ENCODE measurements at regions of chr3 and their contacts with region 1.

Region 1: DNA sequence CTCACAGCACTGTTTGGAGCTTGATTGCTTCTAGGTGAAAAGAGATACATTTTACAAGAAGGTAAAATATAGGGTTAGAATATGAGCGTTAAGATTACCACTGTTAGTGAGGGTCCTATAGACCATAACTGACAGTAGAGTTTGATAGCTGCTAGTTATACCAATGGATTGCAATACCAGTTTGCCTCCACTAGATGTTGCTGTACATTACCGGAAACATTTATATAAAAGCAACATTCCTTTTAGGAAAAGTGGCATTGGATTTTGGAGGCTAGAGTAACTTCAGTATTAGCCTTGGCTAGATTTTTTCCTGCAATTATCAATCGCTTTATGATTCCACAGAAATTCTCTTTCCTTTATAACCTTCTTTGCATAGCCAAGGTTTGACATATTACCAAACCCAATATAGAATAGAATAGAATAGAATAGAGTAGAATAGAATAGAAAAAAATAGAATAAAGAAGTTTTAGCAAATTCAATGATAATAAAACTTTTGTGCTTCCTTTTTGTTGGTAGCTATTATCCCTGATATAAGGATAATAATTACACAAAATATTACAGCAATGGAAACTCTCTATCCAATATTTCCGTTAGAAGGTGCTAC is 1093.6 kb upstream of the ALCAM start:
- DNase-seq: peak in 7 of 42 donors; percentile 3 to 60 (median 28)

Region 2: DNA sequence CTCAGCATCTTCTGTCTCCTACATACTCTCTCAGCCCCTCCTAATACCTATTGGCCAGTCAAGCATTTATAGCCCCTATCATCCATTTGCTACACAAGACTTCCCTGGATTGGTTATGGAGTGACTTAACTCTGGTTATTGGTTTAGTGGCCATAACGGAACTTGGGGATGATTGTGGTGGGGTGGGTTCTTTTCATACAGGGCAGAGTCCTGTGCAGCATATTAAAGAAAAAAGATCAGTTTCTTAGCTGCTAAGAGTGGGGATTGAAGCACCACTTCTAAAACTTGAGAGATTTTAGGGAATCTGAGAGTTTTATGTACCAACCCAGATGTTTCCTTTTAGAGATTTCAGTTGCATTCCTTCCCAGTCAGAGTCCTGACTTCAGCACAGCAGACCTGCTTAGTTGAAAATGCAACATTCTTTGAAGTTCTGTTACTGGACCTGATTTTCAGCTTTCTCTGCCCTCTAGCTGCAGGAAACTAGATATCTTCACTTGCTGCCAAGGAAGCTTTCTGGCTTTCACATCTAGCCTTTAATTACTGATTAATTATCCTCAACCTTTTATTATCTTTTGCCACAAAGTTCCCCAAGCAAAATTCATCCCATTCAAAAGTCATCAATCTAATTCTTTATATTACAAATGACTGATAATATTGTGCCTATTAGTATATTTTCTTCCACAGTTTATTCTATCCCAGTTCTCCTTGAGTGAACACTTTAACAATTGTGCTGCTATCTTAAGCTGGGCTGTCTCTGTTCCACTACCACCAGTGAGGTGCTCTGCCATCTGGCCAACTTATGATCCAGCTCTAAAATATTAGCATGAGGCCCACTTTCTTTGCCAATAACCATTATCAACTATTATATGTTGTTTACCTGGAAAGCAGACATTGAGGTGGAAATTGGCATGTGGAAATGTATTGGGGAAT is 187.6 kb after region 1 on chr3:
- intact Hi-C with region 1: loop called (anchors 5 kb)
- DNase-seq: peak in 20 of 42 donors; percentile 2 to 75 (median 32)

Measured in head of caudate nucleus (tissue), 42 donors.